Astrocyte of the cerebellum (primary cell): ENCODE measurements at regions of chr15 and their contacts with region 1.

Region 1: GRCh38 chr15:75578948-75579920 is at the start of gene PTPN9:
- DNase-seq: peak; percentile 58
- H3K4me3 ChIP-seq: peak within 1 kb of the TSS; percentile 89
- CTCF ChIP-seq: peak; percentile 36

Region 2: GRCh38 chr15:75508840-75509532 is 70.2 kb before region 1 on chr15:
- in situ Hi-C with region 1: loop called (anchors 5 kb)
- DNase-seq: peak; percentile 39
- H3K4me3 ChIP-seq: no peak overlapping the region
- CTCF ChIP-seq: peak; percentile 78

Region 3: DNA sequence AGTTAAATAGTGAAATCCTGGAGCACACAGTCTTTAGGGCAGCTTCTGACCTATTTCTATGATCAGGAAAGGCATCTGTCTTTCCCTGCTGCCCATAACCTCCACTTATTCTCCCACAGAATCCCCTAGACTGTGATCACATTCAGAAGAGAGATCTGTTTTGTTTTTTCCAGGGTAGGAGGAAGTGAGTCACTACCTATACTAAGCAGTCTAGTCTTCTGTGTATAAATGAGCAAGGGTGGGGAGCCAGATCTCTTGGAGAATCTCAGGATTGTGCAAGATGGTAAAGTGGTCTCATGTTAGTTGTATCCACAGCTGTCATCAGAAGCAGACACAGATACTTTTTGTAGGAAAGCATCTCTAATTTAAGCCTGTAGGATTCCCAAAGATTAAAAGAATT is 312.7 kb after region 1 on chr15:
- in situ Hi-C with region 1: no loop called
- DNase-seq: peak; percentile 72
- H3K4me3 ChIP-seq: no peak overlapping the region
- CTCF ChIP-seq: no peak